Ovary (tissue), 10 donors: ENCODE measurements at regions of chr15 and their contacts with region 1.

Region 1: DNA sequence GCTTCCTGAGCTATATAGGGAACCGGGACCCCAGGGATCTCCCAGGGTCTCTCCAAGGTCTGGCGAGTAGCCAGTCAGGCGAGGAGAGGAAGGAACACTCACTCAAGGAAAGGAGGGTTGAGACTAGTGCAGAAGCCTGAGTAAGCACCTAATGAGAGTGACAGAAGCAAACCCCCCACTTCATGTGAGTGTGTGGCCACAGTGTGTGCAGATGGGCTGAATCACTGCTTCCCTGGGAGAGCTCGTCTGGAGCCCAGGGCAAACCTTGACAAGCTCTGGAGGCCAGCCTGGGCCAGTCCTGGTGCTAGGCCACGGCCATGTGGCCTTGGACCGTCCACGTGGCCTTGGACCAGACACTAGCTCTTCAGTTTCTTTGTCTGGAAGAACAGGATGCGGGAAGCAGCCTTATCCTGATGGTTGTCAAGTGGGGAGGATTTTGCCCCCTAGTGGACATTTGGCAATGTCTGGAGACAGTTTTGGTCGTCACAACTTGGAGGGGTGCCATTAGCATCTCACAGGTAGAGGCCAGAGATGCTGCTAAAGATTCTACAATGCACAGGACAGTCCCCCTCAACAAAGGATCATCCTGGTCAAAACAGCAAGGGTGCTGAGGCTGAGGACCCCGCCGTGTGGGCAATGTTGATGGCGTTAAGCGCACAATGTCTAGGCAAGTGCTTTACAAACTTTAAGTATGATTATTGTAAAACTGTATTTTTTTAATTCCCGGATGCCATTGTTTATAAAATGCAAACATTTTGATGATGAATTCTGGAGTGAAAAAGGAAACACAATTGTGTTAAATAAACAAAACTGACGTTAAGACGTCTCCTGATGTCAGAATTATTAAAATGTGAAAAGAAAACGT is 34.8 kb upstream of the CTSH start:
- DNase-seq: peak; percentile 62 to 77 (median 75)
- H3K4me3 ChIP-seq: no peak overlapping the region
- H3K27ac ChIP-seq: peak overlapping the region in 1 of 2 donors; percentile 7
- H3K4me1 ChIP-seq: peaks cover 6% of the 10 kb centered on the region
- H3K27me3 ChIP-seq: no peaks in the 10 kb centered on the region
- CTCF ChIP-seq: peak; percentile 23 to 56 (median 49)
- EP300 ChIP-seq: no peak
- POLR2A ChIP-seq: no peak

Region 2: DNA sequence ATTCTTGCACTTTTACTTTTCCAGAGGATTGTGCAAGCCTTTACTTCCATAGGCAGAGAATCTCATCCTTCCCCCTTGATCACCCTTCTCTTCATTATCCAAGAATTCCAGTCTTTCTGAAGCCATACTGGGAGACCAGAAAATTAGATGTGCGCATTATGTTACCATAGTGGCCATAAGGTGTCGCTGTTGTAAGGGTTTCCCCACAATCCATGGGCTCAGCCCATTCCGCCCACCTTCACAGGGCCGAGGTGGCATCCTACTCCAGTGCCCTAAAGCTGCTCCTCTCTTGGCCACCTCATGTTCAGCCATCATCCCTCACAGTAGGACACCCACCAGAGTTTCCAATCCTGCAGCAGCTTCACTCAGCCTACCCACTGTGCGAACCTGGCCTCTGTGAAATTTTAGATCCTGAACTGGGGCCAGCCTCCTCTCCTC is 69.9 kb before region 1 on chr15:
- intact Hi-C with region 1: loop called in 1 of 4 experiments (anchors 5 kb)
- DNase-seq: peak in 2 of 5 donors; percentile 44 to 58
- H3K4me3 ChIP-seq: no peak overlapping the region
- H3K27ac ChIP-seq: no peak overlapping the region
- H3K4me1 ChIP-seq: peaks cover 4% of the 10 kb centered on the region
- H3K27me3 ChIP-seq: no peaks in the 10 kb centered on the region
- CTCF ChIP-seq: peak; percentile 37 to 68 (median 46)
- EP300 ChIP-seq: no peak
- POLR2A ChIP-seq: no peak